Adrenal gland (tissue), 19 donors: ENCODE measurements at regions of chr7 and their contacts with region 1.

Region 1: DNA sequence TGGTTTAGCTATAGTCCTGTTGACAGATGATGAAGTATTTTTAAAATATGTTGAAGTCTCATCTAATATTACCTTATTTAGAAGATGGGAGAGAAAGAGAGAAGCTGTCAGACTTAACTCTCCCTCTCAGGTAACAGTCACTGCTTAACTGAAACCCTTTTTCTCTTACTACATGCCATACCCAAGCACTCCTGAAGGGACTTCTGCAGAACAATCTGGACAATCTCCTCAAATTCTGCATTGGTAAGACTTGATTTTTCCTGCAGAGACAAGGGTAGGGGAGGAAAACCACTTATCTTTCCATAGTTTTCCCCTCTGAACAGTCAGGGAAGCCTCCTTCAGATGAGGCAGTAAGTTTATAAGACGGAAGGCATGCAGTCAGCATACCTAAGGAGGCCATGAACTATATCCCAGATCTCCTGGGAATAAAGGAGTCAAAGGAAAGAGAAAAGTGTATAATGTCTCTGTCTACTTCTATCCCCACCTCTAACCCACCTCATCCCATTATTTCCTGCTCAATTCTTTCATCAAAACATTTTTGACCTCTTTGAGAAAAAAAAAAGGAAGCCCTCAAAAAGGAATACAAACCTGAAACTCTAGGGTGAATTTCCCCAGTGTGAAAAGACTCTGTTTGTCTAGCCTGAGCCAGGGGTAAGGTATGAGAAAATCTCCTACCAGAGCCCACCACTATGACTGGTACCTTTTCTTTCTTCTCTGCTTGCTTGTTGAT is 9.4 kb downstream of the ZCWPW1 start:
- DNase-seq: no peak
- H3K4me3 ChIP-seq: no peak overlapping the region
- H3K27ac ChIP-seq: no peak overlapping the region
- H3K4me1 ChIP-seq: no peaks in the 10 kb centered on the region
- H3K27me3 ChIP-seq: no peaks in the 10 kb centered on the region
- CTCF ChIP-seq: no peak
- POLR2A ChIP-seq: no peak

Region 2: GRCh38 chr7:100208911-100209408 is 210.1 kb before region 1 on chr7:
- intact Hi-C with region 1: no loop called
- DNase-seq: peak in 1 of 7 donors; percentile 48
- H3K4me3 ChIP-seq: no peak overlapping the region
- H3K27ac ChIP-seq: no peak overlapping the region
- H3K4me1 ChIP-seq: no peaks in the 10 kb centered on the region
- H3K27me3 ChIP-seq: no peaks in the 10 kb centered on the region
- CTCF ChIP-seq: no peak
- POLR2A ChIP-seq: no peak

Region 3: DNA sequence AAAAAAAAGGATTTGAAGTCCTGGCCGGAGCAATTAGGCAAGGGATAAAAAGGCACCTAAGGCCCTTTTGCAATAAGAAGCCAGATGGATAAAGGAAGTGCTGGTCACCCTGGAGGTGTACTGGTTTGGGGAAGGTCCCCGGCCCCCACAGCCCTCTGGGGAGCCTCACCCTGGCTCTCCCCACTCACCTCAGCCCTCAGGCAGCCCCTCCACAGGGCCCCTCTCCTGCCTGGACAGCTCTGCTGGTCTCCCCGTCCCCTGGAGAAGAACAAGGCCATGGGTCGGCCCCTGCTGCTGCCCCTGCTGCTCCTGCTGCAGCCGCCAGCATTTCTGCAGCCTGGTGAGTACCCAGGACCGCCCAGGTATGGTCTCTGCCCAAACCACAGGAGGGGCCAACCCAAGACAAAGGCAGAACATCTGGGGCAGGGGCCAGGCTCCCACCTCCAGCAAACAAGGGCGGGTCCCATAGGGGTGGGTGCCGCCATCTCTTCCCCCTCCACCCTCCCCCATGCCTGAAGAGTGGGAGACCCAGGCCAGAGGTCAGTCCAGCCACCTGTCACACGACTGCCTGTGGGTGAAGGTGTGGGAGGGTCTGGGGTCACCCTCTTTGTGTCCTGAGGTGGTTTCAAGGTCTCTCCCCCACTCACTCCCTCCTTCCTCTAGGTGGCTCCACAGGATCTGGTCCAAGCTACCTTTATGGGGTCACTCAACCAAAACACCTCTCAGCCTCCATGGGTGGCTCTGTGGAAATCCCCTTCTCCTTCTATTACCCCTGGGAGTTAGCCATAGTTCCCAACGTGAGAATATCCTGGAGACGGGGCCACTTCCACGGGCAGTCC is 60.8 kb before region 1 on chr7 and contains the start of gene PILRB:
- intact Hi-C with region 1: loop called in 1 of 2 experiments (anchors 10 kb)
- DNase-seq: no peak
- H3K4me3 ChIP-seq: no peak within 1 kb of the TSS
- H3K27ac ChIP-seq: no peak within 1 kb of the TSS
- H3K4me1 ChIP-seq: no peaks in the 10 kb centered on the region
- H3K27me3 ChIP-seq: no peaks in the 10 kb centered on the region
- CTCF ChIP-seq: no peak
- POLR2A ChIP-seq: no peak
- total RNA-seq, gene PILRB: 8.7 to 115 (median 28.1) TPM

Region 4: DNA sequence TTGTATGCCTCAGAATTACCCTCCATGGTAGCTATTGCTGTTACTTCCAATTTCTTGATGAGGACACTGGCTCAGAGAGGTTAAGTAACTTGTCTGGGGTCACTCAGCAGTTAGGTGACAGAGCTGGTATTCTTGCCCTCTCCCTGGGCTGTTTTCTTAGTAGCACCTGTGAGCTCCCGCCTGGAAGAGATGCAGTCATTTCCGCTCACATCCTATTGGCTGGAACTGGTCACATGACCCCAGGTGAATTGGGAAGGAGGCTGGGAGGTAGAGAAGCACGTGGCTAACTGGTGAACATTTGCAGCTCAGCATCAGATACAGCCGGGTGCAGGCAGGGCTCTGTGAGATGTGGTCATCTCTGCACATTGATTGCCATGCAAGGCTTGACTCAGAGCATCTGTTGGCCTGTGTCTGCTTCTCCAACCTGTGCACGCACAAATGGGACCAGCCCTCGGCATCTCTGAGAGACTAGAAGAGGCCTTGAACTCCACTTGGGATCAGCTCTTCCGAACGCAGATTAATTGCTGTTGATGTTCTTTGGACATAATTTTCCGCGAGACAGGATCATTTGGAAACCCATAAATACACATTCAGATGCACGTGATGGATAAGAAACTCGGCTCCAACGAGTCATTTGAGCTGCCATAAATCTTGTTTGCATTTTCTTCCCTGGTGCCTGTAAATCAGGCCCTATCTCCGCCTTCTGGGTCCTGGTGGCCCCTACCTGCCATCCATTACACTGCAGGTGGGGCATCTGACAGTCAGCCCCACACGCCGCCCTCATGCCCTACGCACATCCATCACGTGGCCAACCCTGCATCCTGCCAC is 1167.2 kb after region 1 on chr7:
- intact Hi-C with region 1: no loop called
- DNase-seq: peak in 1 of 7 donors; percentile 28
- H3K4me3 ChIP-seq: no peak overlapping the region
- H3K27ac ChIP-seq: no peak overlapping the region
- H3K4me1 ChIP-seq: no peaks in the 10 kb centered on the region
- H3K27me3 ChIP-seq: no peaks in the 10 kb centered on the region
- CTCF ChIP-seq: no peak
- POLR2A ChIP-seq: no peak